ENCODE measurements at regions of chr9 and their contacts with region 1.

Region 1: DNA sequence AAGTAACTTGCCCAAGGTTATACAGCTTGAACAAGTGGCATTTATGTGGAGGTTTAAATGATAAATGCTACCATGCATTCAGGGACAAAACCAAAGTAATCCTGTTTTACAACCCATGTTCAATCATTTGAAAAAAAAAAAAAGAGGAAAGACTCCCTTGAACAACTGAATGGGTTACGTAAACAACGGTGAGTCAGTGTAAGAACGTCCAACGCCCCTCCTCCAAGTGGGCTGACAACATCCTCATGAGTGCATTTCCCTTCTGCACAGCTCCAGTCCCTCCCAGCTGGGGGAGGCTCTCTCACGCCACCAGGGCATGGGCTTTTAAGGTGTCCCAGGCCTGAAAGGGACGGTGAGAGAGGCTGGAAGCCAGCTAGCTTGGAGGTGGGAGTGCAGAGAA is 90.0 kb downstream of the PRRT1B start:
- DNase-seq: peak; percentile 89 to 94
- H3K4me3 ChIP-seq: no peak overlapping the region
- H3K27ac ChIP-seq: peak overlapping the region; percentile 76
- H3K4me1 ChIP-seq: peaks cover 24% of the 10 kb centered on the region
- H3K27me3 ChIP-seq: no peaks in the 10 kb centered on the region
- CTCF ChIP-seq: no peak

Region 2: GRCh38 chr9:131447148-131447547 is 188.1 kb before region 1 on chr9:
- CTCF ChIA-PET with region 1: no interaction called
- POLR2A ChIA-PET with region 1: interaction called, 11 read pairs
- intact Hi-C with region 1: no loop called
- DNase-seq: no peak
- H3K4me3 ChIP-seq: no peak overlapping the region
- H3K27ac ChIP-seq: no peak overlapping the region
- H3K4me1 ChIP-seq: no peaks in the 10 kb centered on the region
- H3K27me3 ChIP-seq: no peaks in the 10 kb centered on the region
- CTCF ChIP-seq: no peak

Region 3: DNA sequence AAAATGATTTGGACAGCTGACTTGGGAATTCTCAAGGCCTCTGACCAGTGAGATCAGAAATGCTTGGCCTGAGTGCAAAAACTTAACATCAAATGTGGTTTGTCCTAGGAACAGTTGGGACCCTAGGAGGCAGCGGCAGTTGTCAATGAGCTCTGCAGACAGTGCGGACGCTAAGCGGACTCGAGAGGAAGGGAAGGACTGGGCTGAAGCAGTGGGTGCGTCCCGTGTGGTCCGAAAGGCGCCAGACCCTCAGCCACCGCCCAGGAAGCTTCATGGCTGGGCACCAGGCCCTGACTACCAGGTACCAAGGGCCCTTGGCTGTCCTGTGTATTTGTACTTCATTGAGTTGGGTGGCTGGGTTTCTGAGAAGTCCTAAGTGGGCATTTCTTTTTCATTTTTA is 176.2 kb before region 1 on chr9:
- CTCF ChIA-PET with region 1: no interaction called
- POLR2A ChIA-PET with region 1: no interaction called
- intact Hi-C with region 1: no loop called
- DNase-seq: no peak
- H3K4me3 ChIP-seq: no peak overlapping the region
- H3K27ac ChIP-seq: no peak overlapping the region
- H3K4me1 ChIP-seq: no peaks in the 10 kb centered on the region
- H3K27me3 ChIP-seq: no peaks in the 10 kb centered on the region
- CTCF ChIP-seq: no peak

Region 4: DNA sequence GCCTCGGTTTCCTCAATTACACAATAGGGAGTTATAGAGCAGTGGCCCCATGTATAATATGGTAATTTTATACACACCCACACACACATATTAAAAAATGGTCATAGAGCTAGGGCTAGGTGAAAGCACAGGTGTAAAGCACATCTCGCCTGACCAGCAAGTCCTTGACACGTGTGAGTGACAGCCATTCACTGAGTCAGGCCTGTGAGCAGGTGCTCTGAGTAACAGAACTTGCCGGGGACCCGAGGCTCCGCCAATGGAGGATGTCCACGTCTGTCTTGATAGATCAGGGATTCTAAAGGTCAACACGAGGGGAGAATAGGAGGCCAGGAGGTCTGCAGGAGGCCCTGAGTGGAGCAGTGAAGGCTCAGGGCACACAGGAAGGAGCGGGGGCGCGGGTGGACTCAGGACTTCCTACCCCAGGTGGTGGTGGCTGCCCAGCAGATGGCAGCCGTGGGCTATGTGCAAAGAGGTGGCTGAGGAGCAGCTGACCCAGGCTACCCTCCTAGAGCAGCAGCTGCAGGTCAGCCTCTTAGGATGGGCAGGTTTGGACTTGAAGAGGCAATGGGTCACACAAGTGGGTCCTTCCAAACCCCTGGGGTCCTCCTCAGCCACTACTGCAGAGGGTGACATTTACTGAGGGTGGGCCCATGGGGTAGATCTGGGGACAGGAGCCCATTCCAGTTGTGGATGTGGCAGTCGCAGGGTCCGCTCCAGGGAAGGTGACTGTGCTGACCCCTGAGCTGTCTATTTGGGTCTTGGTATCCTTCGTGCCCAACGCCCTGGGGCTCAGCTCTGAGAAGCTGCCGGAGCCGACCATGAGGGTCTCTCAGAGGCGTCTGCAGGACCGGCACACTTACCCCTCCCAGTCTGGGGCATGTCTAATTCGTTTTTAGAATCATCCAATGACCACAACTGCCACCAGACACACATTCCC is 44.1 kb before region 1 on chr9:
- CTCF ChIA-PET with region 1: no interaction called
- POLR2A ChIA-PET with region 1: no interaction called
- intact Hi-C with region 1: loop called (anchors 5 kb)
- DNase-seq: peak; percentile 46 to 83
- H3K4me3 ChIP-seq: no peak overlapping the region
- H3K27ac ChIP-seq: no peak overlapping the region
- H3K4me1 ChIP-seq: peaks cover 10% of the 10 kb centered on the region
- H3K27me3 ChIP-seq: no peaks in the 10 kb centered on the region
- CTCF ChIP-seq: peak; percentile 91

Region 5: DNA sequence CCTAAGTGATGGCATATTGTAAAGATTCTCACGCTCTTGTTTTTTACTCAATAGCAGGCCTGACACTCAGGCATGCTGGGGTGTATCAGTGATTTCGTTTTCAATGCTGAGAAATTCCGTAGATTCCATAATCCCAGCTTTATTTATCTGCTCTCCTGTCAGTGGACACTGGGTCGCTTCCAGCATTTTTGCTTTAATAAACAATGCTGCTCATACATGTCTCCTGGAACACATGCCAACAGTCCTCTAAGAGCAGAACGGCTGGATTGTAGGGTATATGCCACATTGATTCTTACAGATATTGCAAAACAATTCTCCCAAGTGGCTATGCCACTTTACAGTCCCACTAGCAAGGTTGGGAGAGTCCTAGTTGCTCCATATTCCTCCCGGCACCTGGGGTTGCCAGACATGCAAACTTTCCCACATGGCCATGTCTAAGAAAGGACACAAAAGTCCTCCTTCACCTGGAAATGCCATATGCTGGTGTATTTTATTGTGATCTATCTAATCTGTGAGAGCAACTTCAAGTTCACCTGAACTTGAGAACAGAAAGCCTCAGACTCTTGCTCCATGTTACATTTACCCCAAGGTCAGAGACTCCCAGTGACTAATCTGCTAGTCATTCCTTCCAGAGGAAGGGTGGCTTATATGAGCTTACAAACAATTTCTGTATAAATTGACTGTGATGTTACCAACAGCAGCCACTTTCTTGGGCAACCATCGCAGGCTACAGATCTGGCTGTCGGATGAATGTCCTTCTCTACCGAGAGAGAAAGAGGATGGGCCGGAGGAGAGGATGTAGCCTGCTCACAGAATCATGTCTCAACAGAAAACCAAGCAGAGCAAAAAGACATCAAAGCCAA is 22.8 kb after region 1 on chr9:
- CTCF ChIA-PET with region 1: no interaction called
- POLR2A ChIA-PET with region 1: no interaction called
- intact Hi-C with region 1: loop called (anchors 2 kb)
- DNase-seq: peak; percentile 50 to 96
- H3K4me3 ChIP-seq: peak overlapping the region; percentile 27; the same call in 1 of the 2 replicates
- H3K27ac ChIP-seq: peak overlapping the region; percentile 90
- H3K4me1 ChIP-seq: peaks cover 42% of the 10 kb centered on the region
- H3K27me3 ChIP-seq: no peaks in the 10 kb centered on the region
- CTCF ChIP-seq: no peak

Measured in PC-9 (cell line).